PC-3 (cell line): ENCODE measurements at regions of chr2 and their contacts with region 1.

Region 1: DNA sequence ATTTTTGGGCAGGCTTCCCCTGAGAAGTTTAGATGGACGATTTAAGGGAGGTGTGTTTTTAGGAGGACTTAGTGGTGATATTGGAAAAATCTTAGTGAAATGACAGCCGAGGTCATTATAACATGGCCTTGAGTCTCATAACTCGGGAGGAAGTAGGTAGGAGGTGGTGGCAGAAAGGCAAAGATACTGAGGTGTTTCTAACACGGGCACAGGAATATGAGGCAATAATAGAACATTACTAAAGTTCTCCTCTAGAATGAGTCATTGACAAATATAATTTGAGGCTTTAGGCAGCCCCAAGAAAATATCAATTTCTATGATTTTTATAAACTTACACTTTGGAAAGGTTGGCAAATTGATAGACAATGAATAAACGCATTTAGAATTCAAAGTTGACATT is 146.1 kb upstream of the ZEB2 start:
- DNase-seq: peak; percentile 53
- ATAC-seq: peak; percentile 42
- H3K4me3 ChIP-seq: no peak overlapping the region
- H3K27ac ChIP-seq: no peak overlapping the region
- H3K4me1 ChIP-seq: peaks cover 30% of the 10 kb centered on the region
- H3K27me3 ChIP-seq: no peaks in the 10 kb centered on the region
- CTCF ChIP-seq: no peak

Region 2: GRCh38 chr2:144596073-144596871 is 69.8 kb before region 1 on chr2:
- CTCF ChIA-PET with region 1: no interaction called
- POLR2A ChIA-PET with region 1: no interaction called
- intact Hi-C with region 1: loop called (anchors 5 kb)
- DNase-seq: peak; percentile 83
- ATAC-seq: peak; percentile 97
- H3K4me3 ChIP-seq: peak overlapping the region; percentile 29; the same call in 1 of the 2 replicates
- H3K27ac ChIP-seq: peak overlapping the region; percentile 73
- H3K4me1 ChIP-seq: peaks cover 19% of the 10 kb centered on the region
- H3K27me3 ChIP-seq: no peaks in the 10 kb centered on the region
- CTCF ChIP-seq: no peak

Region 3: DNA sequence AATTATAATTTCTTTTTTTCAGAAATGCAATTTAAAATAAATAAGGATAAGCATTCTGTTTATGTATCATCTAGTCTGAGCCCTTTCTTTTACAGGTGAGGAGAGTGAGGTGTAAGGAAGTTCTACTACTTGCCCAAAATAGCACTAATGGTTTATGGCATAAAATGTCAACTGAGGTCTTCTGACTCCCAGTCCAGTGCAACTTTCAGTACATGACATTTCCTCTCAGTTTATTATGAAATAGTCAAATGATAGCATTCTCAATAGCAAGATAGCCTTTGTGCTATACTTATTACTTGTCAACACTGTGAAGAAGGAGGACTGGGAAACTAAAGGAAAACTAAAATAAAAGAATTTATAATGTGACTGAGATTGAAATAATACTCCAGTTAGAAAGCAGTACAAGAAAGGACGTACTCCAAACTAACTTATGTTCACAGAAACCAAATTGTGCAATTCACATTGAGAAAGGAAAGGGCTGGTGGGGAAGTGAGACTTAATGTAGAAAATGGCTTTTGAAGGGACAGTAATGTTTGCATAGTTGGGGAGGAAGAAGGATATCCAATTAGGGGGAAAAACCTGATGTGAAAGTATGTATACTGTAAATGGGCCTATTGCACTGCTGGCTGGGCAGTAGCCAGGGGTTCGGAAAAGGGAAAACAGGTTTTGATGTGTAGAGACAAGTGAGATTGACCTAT is 20.6 kb after region 1 on chr2:
- CTCF ChIA-PET with region 1: no interaction called
- POLR2A ChIA-PET with region 1: no interaction called
- intact Hi-C with region 1: no loop called
- DNase-seq: no peak
- ATAC-seq: no peak
- H3K4me3 ChIP-seq: no peak overlapping the region
- H3K27ac ChIP-seq: no peak overlapping the region
- H3K4me1 ChIP-seq: no peaks in the 10 kb centered on the region
- H3K27me3 ChIP-seq: no peaks in the 10 kb centered on the region
- CTCF ChIP-seq: no peak